CD4-positive, alpha-beta T cell (primary cell): ENCODE measurements at regions of chr7 and their contacts with region 1.

Region 1: DNA sequence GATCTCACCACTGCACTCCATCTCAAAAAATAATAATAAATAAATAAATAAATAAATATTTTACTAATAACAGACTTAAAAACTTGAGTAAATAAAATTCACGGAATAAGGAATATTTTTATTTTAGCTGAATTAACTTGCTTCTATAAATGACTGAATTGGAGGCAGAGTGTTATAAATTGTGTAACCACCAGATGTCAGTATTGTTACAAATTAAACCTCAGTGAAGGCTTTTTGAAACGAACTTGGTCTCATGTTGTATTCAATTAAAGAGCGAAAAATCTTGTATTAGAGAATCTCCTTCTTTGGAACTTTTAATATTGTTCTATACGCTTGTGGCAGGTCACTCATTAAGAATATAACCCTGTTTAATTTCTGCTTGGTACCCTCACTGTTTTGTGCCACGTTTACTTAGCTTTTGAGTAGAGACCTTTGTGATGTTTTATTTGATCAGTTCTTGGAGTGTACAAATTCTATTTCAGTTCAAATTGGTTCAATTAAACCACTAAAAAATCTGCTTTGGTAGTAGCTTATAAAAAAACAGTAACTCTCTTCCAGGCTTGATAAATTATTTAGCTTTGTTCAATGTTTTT is 45.6 kb upstream of the SCIN start:
- DNase-seq: peak in 3 of 14 experiments; percentile 43 to 60 (median 54)
- ATAC-seq: no peak
- H3K4me3 ChIP-seq: no peak overlapping the region
- H3K4me3 Mint-ChIP-seq: no peak overlapping the region
- H3K27ac ChIP-seq: no peak overlapping the region
- H3K27ac Mint-ChIP-seq: no peak overlapping the region
- H3K4me1 ChIP-seq: no peaks in the 10 kb centered on the region
- H3K4me1 Mint-ChIP-seq: no peaks in the 10 kb centered on the region
- H3K27me3 ChIP-seq: peaks cover 0 to 12% of the 10 kb centered on the region in 2 experiments
- H3K27me3 Mint-ChIP-seq: peaks cover 38% of the 10 kb centered on the region
- CTCF ChIP-seq: peak; percentile 80

Region 2: GRCh38 chr7:13702251-13702650 is 1177.4 kb after region 1 on chr7:
- CTCF ChIA-PET with region 1: no interaction called
- POLR2A ChIA-PET with region 1: no interaction called
- intact Hi-C with region 1: loop called in 1 of 2 experiments (anchors 5 kb)
- DNase-seq: no peak
- ATAC-seq: no peak
- H3K4me3 ChIP-seq: no peak overlapping the region
- H3K4me3 Mint-ChIP-seq: no peak overlapping the region
- H3K27ac ChIP-seq: no peak overlapping the region
- H3K27ac Mint-ChIP-seq: no peak overlapping the region
- H3K4me1 ChIP-seq: no peaks in the 10 kb centered on the region
- H3K4me1 Mint-ChIP-seq: no peaks in the 10 kb centered on the region
- H3K27me3 ChIP-seq: no peaks in the 10 kb centered on the region
- H3K27me3 Mint-ChIP-seq: no peaks in the 10 kb centered on the region
- CTCF ChIP-seq: no peak